Mammary epithelial cell (primary cell): ENCODE measurements at regions of chr2 and their contacts with region 1.

Region 1: DNA sequence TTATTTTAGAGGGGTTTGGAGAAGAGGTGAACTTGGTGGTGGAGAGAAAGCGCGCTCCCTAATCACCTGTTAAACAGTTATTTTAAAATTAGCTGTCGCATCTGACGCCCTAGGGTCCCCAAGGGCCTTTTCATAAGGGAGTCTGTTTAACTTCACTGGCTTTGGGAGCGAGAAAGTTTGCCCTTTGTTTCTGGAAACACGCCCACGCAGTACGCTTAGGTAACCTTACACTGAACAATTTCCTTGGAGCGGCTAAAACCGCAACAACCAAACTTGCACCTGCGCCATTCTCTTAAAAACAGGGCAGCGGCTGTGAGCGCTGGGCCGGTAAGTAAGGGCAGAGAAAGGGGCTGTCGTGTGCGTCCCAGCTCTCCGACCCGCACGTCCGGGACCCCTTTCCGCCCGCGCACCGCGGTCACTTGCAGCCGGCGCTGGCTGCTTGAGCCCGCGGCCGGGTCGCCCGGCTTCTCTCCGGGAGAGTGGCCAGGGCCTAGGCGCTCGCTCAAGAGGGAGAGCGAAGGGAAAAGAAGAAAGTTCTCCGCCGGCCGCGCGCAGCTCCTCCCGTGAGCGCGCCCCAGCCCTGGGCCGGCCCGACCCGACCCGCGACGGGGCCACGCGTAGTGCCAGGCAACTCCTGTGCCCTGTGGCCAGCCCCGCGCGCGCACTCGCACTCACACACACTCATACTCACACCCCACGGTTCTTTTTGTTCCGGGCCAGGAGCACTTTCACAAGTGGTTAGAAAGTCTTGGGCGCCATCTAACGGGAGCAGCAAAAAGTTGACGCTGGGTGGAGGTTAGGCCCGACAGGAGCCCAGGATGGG is 19.2 kb downstream of the POU3F3 start:
- DNase-seq: peak; percentile 46
- H3K4me3 ChIP-seq: peak overlapping the region; percentile 11 to 48 (median 47)
- H3K27ac ChIP-seq: no peak overlapping the region
- H3K4me1 ChIP-seq: peaks cover 12% of the 10 kb centered on the region
- H3K27me3 ChIP-seq: peaks cover 30% of the 10 kb centered on the region
- CTCF ChIP-seq: peak; percentile 38 to 68

Region 2: GRCh38 chr2:102975996-102976975 is 1896.8 kb before region 1 on chr2:
- CTCF ChIA-PET with region 1: no interaction called
- dilution Hi-C with region 1: no loop called
- in situ Hi-C with region 1: no loop called
- intact Hi-C with region 1: loop called (anchors 1 kb)
- DNase-seq: peak; percentile 34
- H3K4me3 ChIP-seq: no peak overlapping the region
- H3K27ac ChIP-seq: no peak overlapping the region
- H3K4me1 ChIP-seq: no peaks in the 10 kb centered on the region
- H3K27me3 ChIP-seq: no peaks in the 10 kb centered on the region
- CTCF ChIP-seq: peak; percentile 46 to 91

Region 3: GRCh38 chr2:104944495-104944894 is 71.4 kb after region 1 on chr2:
- CTCF ChIA-PET with region 1: no interaction called
- dilution Hi-C with region 1: no loop called
- in situ Hi-C with region 1: no loop called
- intact Hi-C with region 1: loop called (anchors 1 kb)
- DNase-seq: no peak
- H3K4me3 ChIP-seq: no peak overlapping the region
- H3K27ac ChIP-seq: no peak overlapping the region
- H3K4me1 ChIP-seq: no peaks in the 10 kb centered on the region
- H3K27me3 ChIP-seq: peaks cover 2% of the 10 kb centered on the region
- CTCF ChIP-seq: peak; percentile 37 to 44